CD8-positive, alpha-beta T cell (primary cell): ENCODE measurements at regions of chr9 and their contacts with region 1.

Region 1: DNA sequence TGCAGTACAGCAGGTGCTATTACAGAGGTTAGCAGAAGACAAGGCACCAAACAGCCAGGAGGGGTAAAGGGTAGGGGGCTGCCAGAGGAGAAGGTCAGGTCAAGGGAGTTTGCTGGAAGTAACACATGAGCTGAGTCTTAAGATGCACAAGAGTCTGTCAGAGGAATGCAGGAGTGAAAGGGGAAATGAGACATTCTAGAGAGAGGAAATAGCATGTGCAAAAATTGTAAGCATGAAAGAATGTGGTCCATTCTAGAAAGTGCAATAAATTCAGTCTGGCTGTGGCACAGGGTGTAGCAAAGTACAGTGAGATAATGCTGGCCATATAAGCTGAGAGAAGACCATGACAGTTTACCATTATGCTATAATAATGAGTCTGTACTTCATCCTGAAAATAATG is 6.6 kb downstream of the GOLGA1 start:
- DNase-seq: no peak
- ATAC-seq: no peak
- H3K4me3 ChIP-seq: no peak overlapping the region
- H3K4me3 Mint-ChIP-seq: no peak overlapping the region
- H3K27ac ChIP-seq: no peak overlapping the region
- H3K27ac Mint-ChIP-seq: no peak overlapping the region
- H3K4me1 ChIP-seq: no peaks in the 10 kb centered on the region
- H3K4me1 Mint-ChIP-seq: peaks cover 19% of the 10 kb centered on the region
- H3K27me3 ChIP-seq: no peaks in the 10 kb centered on the region
- H3K27me3 Mint-ChIP-seq: no peaks in the 10 kb centered on the region
- CTCF ChIP-seq: no peak

Region 2: GRCh38 chr9:124914753-124915405 is 19.4 kb before region 1 on chr9:
- CTCF ChIA-PET with region 1: no interaction called
- POLR2A ChIA-PET with region 1: no interaction called
- intact Hi-C with region 1: no loop called
- DNase-seq: no peak
- ATAC-seq: no peak
- H3K4me3 ChIP-seq: no peak overlapping the region
- H3K4me3 Mint-ChIP-seq: no peak overlapping the region
- H3K27ac ChIP-seq: no peak overlapping the region
- H3K27ac Mint-ChIP-seq: no peak overlapping the region
- H3K4me1 ChIP-seq: no peaks in the 10 kb centered on the region
- H3K4me1 Mint-ChIP-seq: no peaks in the 10 kb centered on the region
- H3K27me3 ChIP-seq: no peaks in the 10 kb centered on the region
- H3K27me3 Mint-ChIP-seq: no peaks in the 10 kb centered on the region
- CTCF ChIP-seq: no peak

Region 3: DNA sequence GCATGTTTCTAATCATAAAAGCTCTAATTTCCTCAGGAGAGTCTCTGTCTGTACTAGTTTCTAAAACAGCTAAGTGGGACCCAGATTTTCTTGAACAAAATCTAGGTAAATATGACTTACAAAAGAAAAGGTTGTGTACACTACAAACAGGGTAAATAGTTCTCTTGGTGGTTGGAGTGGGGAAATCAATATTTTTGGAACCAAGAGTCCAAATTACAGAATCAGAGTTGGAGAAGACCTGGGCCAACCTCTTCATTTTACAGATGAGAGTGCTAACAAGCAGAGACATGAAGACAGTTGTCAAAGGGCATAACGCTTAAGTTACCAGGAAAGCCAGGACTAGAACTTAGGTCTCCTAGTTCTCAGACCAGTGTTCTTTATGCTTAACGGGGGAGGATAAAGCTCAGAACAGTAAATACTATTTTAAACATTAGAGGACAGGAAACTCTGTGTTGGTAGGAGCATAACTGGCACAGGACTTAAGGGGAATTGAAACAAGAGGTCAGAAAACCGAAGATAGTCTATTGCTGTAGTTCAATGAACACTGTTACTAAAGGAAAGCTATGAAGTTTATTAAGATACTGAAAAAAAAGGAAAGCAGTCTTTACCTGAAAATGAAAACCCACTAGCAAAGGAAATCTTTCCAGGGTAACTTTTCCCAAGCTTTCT is 15.9 kb after region 1 on chr9:
- CTCF ChIA-PET with region 1: no interaction called
- POLR2A ChIA-PET with region 1: no interaction called
- intact Hi-C with region 1: no loop called
- DNase-seq: no peak
- ATAC-seq: no peak
- H3K4me3 ChIP-seq: no peak overlapping the region
- H3K4me3 Mint-ChIP-seq: no peak overlapping the region
- H3K27ac ChIP-seq: no peak overlapping the region
- H3K27ac Mint-ChIP-seq: no peak overlapping the region
- H3K4me1 ChIP-seq: no peaks in the 10 kb centered on the region
- H3K4me1 Mint-ChIP-seq: no peaks in the 10 kb centered on the region
- H3K27me3 ChIP-seq: no peaks in the 10 kb centered on the region
- H3K27me3 Mint-ChIP-seq: no peaks in the 10 kb centered on the region
- CTCF ChIP-seq: no peak

Region 4: DNA sequence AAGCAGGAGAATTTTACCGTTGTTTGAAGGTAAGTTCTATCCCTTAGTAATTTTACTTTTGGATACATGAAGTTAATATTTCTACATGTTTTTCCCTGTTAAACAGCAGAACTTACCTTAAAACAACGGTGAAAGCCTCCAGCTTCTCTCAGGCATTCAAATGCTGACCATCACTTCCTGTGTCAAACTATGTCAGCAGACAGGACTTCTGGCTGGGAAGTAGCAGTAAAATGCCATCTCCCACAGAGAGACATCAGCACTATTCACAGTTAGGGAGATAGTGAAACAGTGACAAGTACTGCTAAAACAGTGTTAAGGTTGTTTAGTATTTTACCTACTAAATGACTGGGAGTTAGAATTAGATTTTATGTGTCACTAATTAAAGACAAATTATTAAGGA is 40.8 kb after region 1 on chr9:
- CTCF ChIA-PET with region 1: no interaction called
- POLR2A ChIA-PET with region 1: no interaction called
- intact Hi-C with region 1: loop called in 1 of 2 experiments (anchors 2 kb)
- DNase-seq: peak in 1 of 9 experiments; percentile 9
- ATAC-seq: no peak
- H3K4me3 ChIP-seq: no peak overlapping the region
- H3K4me3 Mint-ChIP-seq: no peak overlapping the region
- H3K27ac ChIP-seq: no peak overlapping the region
- H3K27ac Mint-ChIP-seq: no peak overlapping the region
- H3K4me1 ChIP-seq: no peaks in the 10 kb centered on the region
- H3K4me1 Mint-ChIP-seq: no peaks in the 10 kb centered on the region
- H3K27me3 ChIP-seq: no peaks in the 10 kb centered on the region
- H3K27me3 Mint-ChIP-seq: no peaks in the 10 kb centered on the region
- CTCF ChIP-seq: no peak

Region 5: DNA sequence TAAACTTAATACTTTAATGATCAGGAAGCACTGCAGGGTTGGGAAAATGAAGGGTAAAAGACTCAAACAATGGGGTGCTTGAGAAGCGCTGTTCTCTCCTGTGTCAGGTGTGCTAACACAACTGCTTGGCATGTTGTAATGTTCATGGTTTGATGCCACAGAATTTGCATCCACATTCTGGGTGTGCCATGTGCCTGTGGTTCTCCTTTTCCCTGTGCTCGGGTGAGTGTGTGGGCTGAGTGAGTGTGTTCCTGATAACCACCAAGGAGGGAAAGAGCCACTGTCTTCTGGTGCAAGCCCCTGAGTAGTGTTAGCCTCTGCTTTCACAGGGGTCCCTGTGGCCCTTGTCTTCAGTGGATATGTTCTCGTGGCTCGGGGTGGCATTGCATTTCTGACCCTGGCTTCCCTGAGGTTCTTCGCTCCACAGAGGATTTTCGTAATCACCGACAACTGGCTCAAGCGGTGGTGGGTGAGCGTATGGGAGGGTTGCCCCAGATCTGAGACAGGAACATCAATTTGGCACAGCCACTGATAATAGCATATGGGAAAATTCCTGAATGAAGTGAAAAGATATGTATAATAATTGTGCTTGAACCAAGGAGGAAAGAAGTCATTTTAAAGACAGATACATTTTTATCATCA is 1494.4 kb after region 1 on chr9:
- CTCF ChIA-PET with region 1: no interaction called
- POLR2A ChIA-PET with region 1: no interaction called
- intact Hi-C with region 1: loop called in 1 of 2 experiments (anchors 5 kb)
- DNase-seq: no peak
- ATAC-seq: no peak
- H3K4me3 ChIP-seq: no peak overlapping the region
- H3K4me3 Mint-ChIP-seq: no peak overlapping the region
- H3K27ac ChIP-seq: no peak overlapping the region
- H3K27ac Mint-ChIP-seq: no peak overlapping the region
- H3K4me1 ChIP-seq: peaks cover 6% of the 10 kb centered on the region
- H3K4me1 Mint-ChIP-seq: peaks cover 20% of the 10 kb centered on the region
- H3K27me3 ChIP-seq: no peaks in the 10 kb centered on the region
- H3K27me3 Mint-ChIP-seq: no peaks in the 10 kb centered on the region
- CTCF ChIP-seq: no peak